A549 (cell line): ENCODE measurements at regions of chr20 and their contacts with region 1.

Region 1: GRCh38 chr20:47272893-47273590 is 83.5 kb downstream of the ZMYND8 start:
- DNase-seq: peak; percentile 67 to 77
- ATAC-seq: peak; percentile 63 to 68; a peak in 4 of 6 replicates
- H3K4me3 ChIP-seq: no peak overlapping the region
- H3K27ac ChIP-seq: peak overlapping the region; percentile 84 to 93
- H3K4me1 ChIP-seq: peaks cover 61% of the 10 kb centered on the region
- CTCF ChIP-seq: peak; percentile 95
- EP300 ChIP-seq: no peak
- POLR2A ChIP-seq: no peak
- RAD21 ChIP-seq: peak; percentile 98 to 99

Region 2: GRCh38 chr20:46746956-46747526 is 526.0 kb before region 1 on chr20:
- CTCF ChIA-PET with region 1: interaction called, 23 read pairs
- POLR2A ChIA-PET with region 1: no interaction called
- DNase-seq: peak in 1 of 2 experiments; percentile 59
- ATAC-seq: peak; percentile 70 to 76
- H3K4me3 ChIP-seq: no peak overlapping the region
- H3K27ac ChIP-seq: no peak overlapping the region
- H3K4me1 ChIP-seq: peaks cover 13% of the 10 kb centered on the region
- CTCF ChIP-seq: no peak
- EP300 ChIP-seq: no peak
- POLR2A ChIP-seq: no peak
- RAD21 ChIP-seq: no peak

Region 3: DNA sequence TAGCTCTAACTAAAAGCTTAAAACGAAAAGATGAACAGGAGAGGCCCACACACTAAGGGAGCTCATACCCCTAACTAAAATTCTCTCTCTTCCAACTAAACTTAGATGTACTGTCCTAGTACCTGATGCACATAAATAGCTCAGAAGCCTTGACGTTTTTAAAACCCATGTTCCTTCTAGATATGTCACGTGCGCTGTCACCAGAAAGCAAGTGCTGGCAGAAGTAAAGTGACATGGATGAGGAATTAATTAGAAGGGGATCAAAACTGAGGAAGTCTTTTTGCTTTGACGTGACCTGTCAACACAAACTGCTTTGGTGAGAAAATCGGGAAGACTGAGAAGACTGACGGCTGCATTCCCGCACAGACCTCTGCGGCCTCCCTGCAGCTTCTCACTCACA is 59.1 kb before region 1 on chr20:
- CTCF ChIA-PET with region 1: interaction called, 13 read pairs
- POLR2A ChIA-PET with region 1: no interaction called
- DNase-seq: no peak
- ATAC-seq: no peak
- H3K4me3 ChIP-seq: no peak overlapping the region
- H3K27ac ChIP-seq: no peak overlapping the region
- H3K4me1 ChIP-seq: no peaks in the 10 kb centered on the region
- CTCF ChIP-seq: no peak
- EP300 ChIP-seq: no peak
- POLR2A ChIP-seq: no peak
- RAD21 ChIP-seq: no peak

Region 4: GRCh38 chr20:47258745-47259695 is 14.0 kb before region 1 on chr20:
- CTCF ChIA-PET with region 1: interaction called, 41 read pairs
- POLR2A ChIA-PET with region 1: interaction called, 4 read pairs
- DNase-seq: peak in 1 of 2 experiments; percentile 23
- ATAC-seq: no peak
- H3K4me3 ChIP-seq: no peak overlapping the region
- H3K27ac ChIP-seq: no peak overlapping the region
- H3K4me1 ChIP-seq: 0 out of 3 replicates have a peak, but pooled peaks cover 4% of the 10 kb centered on the region
- CTCF ChIP-seq: no peak
- EP300 ChIP-seq: no peak
- POLR2A ChIP-seq: no peak
- RAD21 ChIP-seq: no peak

Region 5: DNA sequence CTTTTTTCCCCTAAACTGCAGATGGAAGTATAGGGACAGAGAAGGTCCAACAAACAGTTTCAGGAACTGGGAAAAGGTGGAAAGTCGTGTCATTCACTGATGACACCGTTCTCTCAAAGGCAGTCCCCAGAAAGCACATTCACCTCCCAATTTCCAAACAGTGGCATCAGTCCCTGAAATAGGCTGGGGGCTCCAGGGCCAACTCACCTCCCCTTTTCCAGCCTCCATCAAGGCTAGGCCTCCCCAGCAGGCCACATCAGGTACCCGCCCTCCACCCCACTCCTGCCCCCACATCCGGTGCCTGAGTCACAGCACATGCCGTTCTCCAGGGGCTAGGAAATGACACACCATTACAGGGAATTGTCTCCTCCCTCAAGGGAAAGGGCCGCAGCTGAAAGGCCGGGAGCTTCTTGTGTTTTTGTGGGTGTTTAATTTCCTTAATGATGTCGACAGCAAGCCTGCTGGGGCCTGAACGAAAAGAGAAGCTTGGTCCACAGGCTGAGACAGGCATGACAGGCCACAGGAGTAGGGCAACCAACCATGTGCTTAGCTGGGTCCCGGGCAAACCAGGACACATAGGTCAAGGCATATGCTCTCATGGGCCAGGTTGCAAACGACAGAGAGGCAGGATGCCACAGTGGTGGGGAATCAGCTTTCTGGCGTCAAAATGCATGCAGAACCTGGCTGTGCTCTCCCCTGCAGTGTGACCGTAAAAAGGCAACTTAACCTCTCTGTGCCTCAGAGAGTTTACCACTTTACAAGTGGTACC is 44.3 kb after region 1 on chr20:
- CTCF ChIA-PET with region 1: interaction called, 74 read pairs
- POLR2A ChIA-PET with region 1: interaction called, 3 read pairs
- DNase-seq: peak; percentile 71 to 82
- ATAC-seq: peak in 1 of 2 experiments; percentile 20; a peak in 2 of 6 replicates
- H3K4me3 ChIP-seq: no peak overlapping the region
- H3K27ac ChIP-seq: peak overlapping the region; percentile 94 to 97
- H3K4me1 ChIP-seq: peaks cover 89% of the 10 kb centered on the region
- CTCF ChIP-seq: no peak
- EP300 ChIP-seq: no peak
- POLR2A ChIP-seq: no peak
- RAD21 ChIP-seq: no peak

Region 6: DNA sequence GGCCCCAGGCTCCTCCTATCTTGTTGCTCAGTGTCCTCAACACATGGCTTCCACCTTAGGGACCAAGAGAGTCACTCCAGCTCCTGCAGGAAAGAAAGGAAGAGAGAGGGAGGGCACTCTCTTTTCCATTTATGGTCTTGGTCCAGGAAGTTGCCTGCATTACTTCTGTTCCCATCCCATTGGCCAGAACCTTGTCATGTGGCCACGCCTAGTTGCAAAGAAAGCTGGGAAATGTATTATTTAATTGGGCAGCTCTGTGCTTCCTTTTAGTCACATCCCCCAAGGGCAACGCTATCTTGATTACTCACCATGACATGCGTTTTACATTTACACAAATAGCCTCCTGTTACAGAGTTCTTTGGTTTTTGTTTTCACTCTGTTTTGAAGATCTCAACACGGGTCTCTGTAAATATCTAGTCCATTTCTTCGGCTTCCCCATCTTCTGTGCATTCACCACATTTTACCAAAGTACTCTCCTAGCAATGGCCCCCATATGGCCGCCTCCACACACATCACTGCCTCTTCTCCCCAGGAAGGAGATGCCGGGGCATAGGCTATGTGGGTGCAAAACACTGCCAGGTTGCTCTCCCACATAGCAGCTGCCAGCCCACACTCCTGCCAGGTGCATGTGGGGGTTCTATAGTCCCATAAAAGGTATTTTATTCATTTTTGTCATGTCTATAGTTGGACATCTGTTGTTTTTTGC is 119.1 kb after region 1 on chr20:
- CTCF ChIA-PET with region 1: interaction called, 684 read pairs
- POLR2A ChIA-PET with region 1: interaction called, 11 read pairs
- DNase-seq: peak; percentile 83 to 99
- ATAC-seq: peak; percentile 81 to 85
- H3K4me3 ChIP-seq: no peak overlapping the region
- H3K27ac ChIP-seq: peak overlapping the region; percentile 90 to 92
- H3K4me1 ChIP-seq: peaks cover 40% of the 10 kb centered on the region
- CTCF ChIP-seq: no peak
- EP300 ChIP-seq: no peak
- POLR2A ChIP-seq: no peak
- RAD21 ChIP-seq: peak in 1 of 2 experiments; percentile 28; a peak in 2 of 5 replicates

Region 7: DNA sequence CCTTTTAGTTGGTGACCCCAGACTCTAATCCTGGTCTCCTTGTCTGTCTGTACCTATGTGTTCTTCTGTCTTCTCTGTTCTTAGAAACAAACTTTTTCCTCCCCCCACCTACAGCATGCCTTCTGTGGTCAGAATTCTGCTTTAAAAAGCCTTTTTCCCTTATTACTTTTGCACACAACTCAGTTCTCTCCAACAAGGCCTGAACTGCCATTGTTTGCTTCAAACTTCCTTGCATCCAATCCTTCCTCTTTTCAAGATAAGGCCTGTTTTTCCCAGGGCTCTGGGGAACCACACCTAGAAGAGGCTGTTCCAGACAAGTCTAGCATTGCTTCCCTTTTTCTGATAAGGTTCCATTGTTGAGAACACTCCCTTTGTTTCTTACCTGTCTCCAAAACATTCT is 206.5 kb after region 1 on chr20:
- CTCF ChIA-PET with region 1: no interaction called
- POLR2A ChIA-PET with region 1: no interaction called
- DNase-seq: no peak
- ATAC-seq: no peak
- H3K4me3 ChIP-seq: no peak overlapping the region
- H3K27ac ChIP-seq: peak overlapping the region; percentile 19 to 20; a peak in 2 of 6 replicates
- H3K4me1 ChIP-seq: no peaks in the 10 kb centered on the region
- CTCF ChIP-seq: no peak
- EP300 ChIP-seq: no peak
- POLR2A ChIP-seq: no peak
- RAD21 ChIP-seq: no peak